Heart left ventricle (tissue), 16 donors: ENCODE measurements at regions of chr2 and their contacts with region 1.

Region 1: DNA sequence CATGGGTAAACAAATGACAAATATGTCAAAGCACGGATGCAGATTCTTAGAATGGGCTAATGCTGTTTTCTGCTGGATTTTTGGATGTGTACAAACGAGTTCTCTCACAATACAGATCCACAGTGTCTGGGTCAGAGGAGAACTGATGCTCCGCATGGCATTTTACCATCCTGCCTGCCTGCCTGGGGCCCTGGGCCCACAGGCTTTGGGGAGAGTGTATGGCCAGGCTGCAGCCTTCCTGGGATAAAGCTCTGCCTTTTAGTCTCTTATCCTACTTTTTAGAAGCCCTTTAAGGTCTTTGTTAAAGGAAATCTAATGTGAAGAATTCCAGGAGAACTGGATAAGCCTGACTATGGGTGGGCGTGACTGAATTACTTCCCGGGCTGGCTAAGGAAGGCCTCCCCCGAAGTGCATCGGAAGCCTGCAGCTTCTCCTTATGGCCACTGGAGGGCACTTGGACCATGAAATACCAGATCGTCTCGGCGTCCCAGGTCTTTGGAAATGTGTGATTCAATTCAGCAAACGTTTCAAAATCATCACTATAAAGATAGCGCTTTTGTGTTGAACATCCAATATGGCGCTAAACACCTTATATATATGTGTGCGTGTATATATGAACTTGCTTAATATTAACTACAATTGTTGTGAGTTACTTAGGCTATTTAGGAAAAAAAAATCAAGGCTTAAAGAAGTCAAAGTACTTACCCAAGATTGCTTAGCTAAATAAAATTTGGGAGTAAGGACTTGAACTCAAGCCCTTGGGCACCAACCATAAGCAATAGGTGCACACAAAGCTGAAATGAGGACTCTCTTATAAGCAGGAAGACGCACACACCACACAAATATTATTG is 15.2 kb upstream of the DNPEP start:
- DNase-seq: peak in 4 of 5 donors; percentile 63 to 75 (median 68)
- ATAC-seq: peak in 1 of 4 donors; percentile 26
- H3K4me3 ChIP-seq: no peak overlapping the region
- H3K27ac ChIP-seq: peak overlapping the region in 7 of 12 donors; percentile 90 to 99 (median 93)
- H3K4me1 ChIP-seq: peaks cover 0 to 48% (median 17%) of the 10 kb centered on the region in 12 donors
- H3K27me3 ChIP-seq: peaks cover 0 to 3% (median 0%) of the 10 kb centered on the region in 9 donors
- CTCF ChIP-seq: peak; percentile 81 to 94 (median 88)
- POLR2A ChIP-seq: no peak

Region 2: DNA sequence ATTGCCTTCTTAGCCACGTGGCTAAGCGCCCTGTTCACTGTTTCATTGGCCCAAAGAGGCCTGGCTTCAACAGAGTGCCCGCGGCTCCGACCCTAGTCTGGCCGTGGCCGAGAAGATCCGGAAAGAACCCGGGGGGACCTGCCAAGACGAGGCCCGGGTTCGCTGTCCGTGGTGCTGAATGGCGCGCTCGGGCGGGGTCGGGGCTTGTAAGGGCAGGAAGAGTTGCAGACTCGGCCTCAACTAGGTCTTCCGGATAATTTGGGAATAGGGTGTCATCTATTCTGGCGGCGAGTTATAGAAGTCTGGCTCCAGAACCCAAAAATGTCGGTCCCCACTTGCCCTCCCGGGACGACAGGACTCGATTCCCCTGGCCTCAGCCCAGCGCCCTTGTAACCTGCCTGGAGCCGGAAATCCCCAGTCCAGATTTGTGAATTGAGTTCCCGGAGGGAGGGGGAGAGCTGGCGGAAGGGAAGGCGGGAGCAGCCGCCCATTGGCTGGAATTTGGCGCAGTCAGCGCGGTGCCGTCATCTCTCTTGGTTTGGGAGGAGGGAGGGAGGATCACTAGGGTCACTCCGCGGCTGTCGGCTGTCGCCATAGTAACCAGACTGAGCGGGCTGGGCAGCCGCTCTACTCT is 439.9 kb before region 1 on chr2:
- intact Hi-C with region 1: no loop called
- DNase-seq: peak; percentile 41 to 82 (median 72)
- ATAC-seq: peak; percentile 30 to 74 (median 52)
- H3K4me3 ChIP-seq: peak overlapping the region in 3 of 12 donors; percentile 4 to 17 (median 15)
- H3K27ac ChIP-seq: no peak overlapping the region
- H3K4me1 ChIP-seq: peaks cover 0 to 20% (median 3%) of the 10 kb centered on the region in 12 donors
- H3K27me3 ChIP-seq: peaks cover 44 to 95% (median 75%) of the 10 kb centered on the region in 9 donors
- CTCF ChIP-seq: no peak
- POLR2A ChIP-seq: no peak

Region 3: GRCh38 chr2:219430633-219431615 is 28.0 kb after region 1 on chr2:
- intact Hi-C with region 1: loop called in 4 of 10 experiments (anchors 2 to 5 kb)
- DNase-seq: peak in 4 of 5 donors; percentile 70 to 88 (median 80)
- ATAC-seq: peak; percentile 70 to 81 (median 74)
- H3K4me3 ChIP-seq: no peak overlapping the region
- H3K27ac ChIP-seq: peak overlapping the region in 11 of 12 donors; percentile 35 to 96 (median 75)
- H3K4me1 ChIP-seq: peaks cover 0 to 31% (median 7%) of the 10 kb centered on the region in 12 donors
- H3K27me3 ChIP-seq: peaks cover 0 to 20% (median 9%) of the 10 kb centered on the region in 9 donors
- CTCF ChIP-seq: peak in 8 of 12 donors; percentile 18 to 49 (median 36)
- POLR2A ChIP-seq: no peak

Region 4: GRCh38 chr2:219475697-219476651 is 73.1 kb after region 1 on chr2:
- intact Hi-C with region 1: loop called in 2 of 10 experiments (anchors 5 to 10 kb)
- DNase-seq: peak in 4 of 5 donors; percentile 67 to 79 (median 68)
- ATAC-seq: peak in 3 of 4 donors; percentile 31 to 67 (median 60)
- H3K4me3 ChIP-seq: no peak overlapping the region
- H3K27ac ChIP-seq: peak overlapping the region in 7 of 12 donors; percentile 25 to 72 (median 63)
- H3K4me1 ChIP-seq: peaks cover 0 to 31% (median 0%) of the 10 kb centered on the region in 12 donors
- H3K27me3 ChIP-seq: no peaks in the 10 kb centered on the region
- CTCF ChIP-seq: peak; percentile 79 to 90 (median 86)
- POLR2A ChIP-seq: no peak

Region 5: GRCh38 chr2:219530048-219530963 is 127.4 kb after region 1 on chr2:
- intact Hi-C with region 1: loop called (anchors 1 to 5 kb)
- DNase-seq: peak; percentile 82 to 92 (median 84)
- ATAC-seq: peak; percentile 69 to 88 (median 82)
- H3K4me3 ChIP-seq: peak overlapping the region in 3 of 12 donors; percentile 15 to 40 (median 26)
- H3K27ac ChIP-seq: no peak overlapping the region
- H3K4me1 ChIP-seq: peaks cover 0 to 26% (median 13%) of the 10 kb centered on the region in 12 donors
- H3K27me3 ChIP-seq: peaks cover 0 to 48% (median 11%) of the 10 kb centered on the region in 9 donors
- CTCF ChIP-seq: peak; percentile 92 to 98 (median 95)
- POLR2A ChIP-seq: no peak

Region 6: DNA sequence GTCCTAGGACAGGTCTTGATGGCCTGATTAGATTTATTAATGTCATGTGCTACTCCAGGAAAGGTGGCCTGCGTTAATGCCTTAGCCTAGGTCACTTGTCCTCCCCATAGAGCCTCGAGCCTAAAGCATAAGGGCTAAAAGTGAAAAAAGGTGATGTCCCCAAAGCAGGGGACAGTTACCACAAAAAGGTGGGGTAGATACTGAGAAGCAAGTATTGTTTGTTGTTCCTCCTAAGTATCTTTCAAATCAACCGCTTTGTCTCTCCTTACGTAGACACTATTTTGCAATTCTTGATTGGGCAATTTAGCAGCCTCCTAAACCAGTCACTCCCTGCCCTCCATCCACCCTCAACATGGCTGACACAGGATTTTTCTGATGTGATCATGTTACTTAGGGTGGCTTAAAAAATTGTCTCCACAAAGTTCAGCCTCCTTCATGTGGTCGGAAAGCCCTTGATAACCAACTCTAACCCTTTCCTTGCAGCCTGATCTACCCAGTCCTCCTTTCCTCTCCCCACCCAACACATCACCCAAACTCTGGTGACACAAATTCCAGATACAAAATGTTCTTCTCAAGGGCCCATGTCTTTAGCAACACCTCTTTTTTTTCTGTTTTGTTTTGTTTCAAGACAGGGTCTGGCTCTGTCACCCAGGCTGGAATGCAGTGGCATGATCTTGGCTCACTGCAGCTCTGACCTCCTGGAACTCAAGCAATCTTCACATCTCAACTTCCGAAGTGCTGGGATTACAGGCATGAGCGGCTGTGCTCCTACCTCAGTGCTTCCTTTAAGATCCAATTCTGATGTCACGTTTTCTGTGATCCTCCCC is 176.1 kb after region 1 on chr2:
- intact Hi-C with region 1: no loop called
- DNase-seq: no peak
- ATAC-seq: no peak
- H3K4me3 ChIP-seq: no peak overlapping the region
- H3K27ac ChIP-seq: no peak overlapping the region
- H3K4me1 ChIP-seq: peaks cover 0 to 10% (median 0%) of the 10 kb centered on the region in 12 donors
- H3K27me3 ChIP-seq: peaks cover 0 to 12% (median 0%) of the 10 kb centered on the region in 9 donors
- CTCF ChIP-seq: no peak
- POLR2A ChIP-seq: no peak

Region 7: GRCh38 chr2:219627103-219628100 is 224.5 kb after region 1 on chr2 and contains the start of gene SLC4A3:
- intact Hi-C with region 1: loop called in 1 of 10 experiments (anchors 10 kb)
- DNase-seq: peak in 3 of 5 donors; percentile 52 to 79 (median 67)
- ATAC-seq: peak in 2 of 4 donors; percentile 8 to 14
- H3K4me3 ChIP-seq: peak within 1 kb of the TSS; percentile 44 to 71 (median 60)
- H3K27ac ChIP-seq: peak within 1 kb of the TSS; percentile 76 to 100 (median 95)
- H3K4me1 ChIP-seq: peaks cover 0 to 67% (median 6%) of the 10 kb centered on the region in 12 donors
- H3K27me3 ChIP-seq: peaks cover 0 to 12% (median 6%) of the 10 kb centered on the region in 9 donors
- CTCF ChIP-seq: peak in 2 of 12 donors; percentile 17 to 34
- POLR2A ChIP-seq: peak in 1 of 2 donors; percentile 34
- total RNA-seq, gene SLC4A3: 249 to 507 (median 428) TPM